ENCODE measurements at regions of chr1 and their contacts with region 1.

Region 1: GRCh38 chr1:28668191-28668955 is at the start of gene GMEB1:
- DNase-seq: peak; percentile 95
- ATAC-seq: peak; percentile 89
- total RNA-seq, gene GMEB1: 6.5 TPM

Region 2: GRCh38 chr1:28602536-28603439 is 65.6 kb before region 1 on chr1:
- intact Hi-C with region 1: no loop called
- DNase-seq: no peak
- ATAC-seq: peak; percentile 58

Region 3: DNA sequence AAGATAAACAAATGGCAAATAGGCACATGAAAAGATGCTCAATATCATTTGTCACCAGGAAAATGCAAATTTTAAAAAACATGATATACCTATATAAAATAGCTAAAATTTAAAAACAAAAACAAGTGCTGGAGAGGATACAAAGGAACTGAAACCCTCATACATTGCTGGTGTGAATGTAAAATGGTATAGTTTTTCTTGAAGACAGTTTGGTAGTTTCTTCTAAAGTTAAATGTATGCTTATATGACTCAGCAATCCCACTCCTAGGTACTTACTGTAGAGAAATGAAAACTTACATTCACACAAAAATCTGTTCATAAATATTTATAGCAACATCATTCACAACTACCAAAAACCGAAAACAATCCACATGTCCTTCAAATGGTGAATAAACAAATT is 36.7 kb before region 1 on chr1:
- intact Hi-C with region 1: no loop called
- DNase-seq: no peak
- ATAC-seq: no peak

Region 4: DNA sequence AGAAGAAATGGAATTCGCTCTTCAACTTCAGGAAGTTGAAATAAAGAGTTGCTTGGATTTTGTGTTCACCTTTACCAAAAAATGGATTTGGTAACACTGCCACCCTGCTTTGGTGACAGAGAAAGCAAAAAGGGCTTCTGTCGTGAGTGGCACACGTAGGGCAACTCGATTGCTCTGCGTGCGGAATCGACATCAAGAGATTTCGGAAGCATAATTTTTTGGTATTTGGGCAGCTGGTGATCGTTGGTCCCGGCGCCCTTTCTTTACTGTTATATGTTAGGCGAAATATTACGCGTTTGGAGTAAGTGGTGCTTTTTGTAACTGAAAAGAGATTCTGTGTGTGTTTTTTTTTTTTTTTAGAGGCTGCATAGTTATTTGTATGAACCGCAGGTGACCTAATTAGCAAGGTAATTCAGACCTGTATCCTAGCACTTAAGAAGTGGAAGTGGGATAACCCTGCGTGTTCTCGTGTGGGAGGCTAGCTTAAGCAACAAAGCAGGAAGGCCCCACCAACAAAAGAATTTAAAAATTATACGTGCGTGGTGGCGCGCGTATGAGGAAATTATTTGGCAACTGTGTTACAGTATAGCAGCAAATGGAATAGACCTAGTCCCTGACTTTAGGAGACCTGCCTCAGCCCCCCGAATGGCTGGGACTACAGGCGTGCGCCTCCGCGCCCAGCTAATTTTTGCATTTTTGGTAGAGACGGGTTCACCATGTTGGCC is 19.7 kb before region 1 on chr1 and contains the start of gene RNU11:
- intact Hi-C with region 1: loop called (anchors 2 kb)
- DNase-seq: peak; percentile 86
- ATAC-seq: peak; percentile 87
- total RNA-seq, gene RNU11: not detected

Measured in Right ventricle myocardium inferior (tissue), 1 donor.